ENCODE measurements at regions of chr11 and their contacts with region 1.

Region 1: DNA sequence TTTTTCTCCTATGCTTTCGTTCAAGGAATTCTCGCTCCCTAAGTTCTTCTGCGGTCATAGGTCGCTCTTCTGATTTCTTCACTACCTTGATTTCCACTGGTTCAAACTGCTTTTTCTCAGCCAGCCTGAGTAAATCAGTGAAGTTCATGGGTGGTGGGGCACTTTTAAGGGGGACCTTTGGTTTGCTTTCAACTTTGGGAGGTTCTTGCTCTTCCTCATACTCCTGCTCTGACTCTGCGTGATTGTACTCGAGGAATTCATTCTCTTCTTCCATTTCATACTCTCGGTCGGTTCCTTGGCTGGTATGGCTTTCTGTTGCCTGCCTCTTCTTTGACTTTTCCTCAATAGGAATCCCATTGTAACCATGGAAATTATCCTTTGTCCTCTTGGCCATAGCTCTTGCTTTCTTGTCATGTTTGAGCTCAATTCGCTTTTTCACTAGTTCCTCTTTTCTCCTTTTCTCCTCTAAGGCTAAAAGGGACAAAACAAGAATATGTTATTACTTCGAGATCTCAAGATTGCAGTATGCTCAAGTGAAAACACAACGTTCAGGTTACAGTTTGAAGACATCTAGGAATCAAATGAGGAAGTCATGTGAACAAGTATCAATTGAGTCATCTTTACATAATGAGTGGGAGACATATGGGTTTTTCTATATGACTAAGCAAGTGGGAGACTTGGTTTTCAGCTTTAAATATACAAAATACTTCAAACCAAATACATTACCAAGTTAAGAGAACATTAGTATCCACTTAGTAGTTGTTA is 16.2 kb downstream of the MISFA start:
- DNase-seq: peak; percentile 14
- H3K4me3 Mint-ChIP-seq: peak overlapping the region; percentile 5
- H3K27ac Mint-ChIP-seq: peak overlapping the region; percentile 77
- H3K4me1 Mint-ChIP-seq: peaks cover 46% of the 10 kb centered on the region
- H3K27me3 Mint-ChIP-seq: no peaks in the 10 kb centered on the region

Region 2: DNA sequence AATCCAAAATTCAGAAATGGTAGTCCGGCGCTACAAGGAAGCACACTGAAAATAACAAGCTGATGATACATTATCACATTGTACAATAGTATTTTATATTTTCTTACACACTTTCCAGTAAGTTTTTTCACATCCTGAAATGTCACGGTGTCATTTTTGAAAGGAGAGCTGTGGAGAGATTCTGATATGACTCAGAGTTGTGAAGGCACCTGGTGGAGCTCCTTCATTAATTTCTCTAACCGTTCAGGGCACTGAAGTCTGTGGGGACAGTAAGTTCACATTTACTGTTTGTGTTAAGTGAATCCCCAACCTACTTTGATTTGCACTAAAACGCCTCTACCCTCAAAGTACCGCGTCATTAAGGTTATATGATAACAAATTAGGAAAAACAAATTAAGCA is 146.8 kb before region 1 on chr11:
- CTCF ChIA-PET with region 1: no interaction called
- POLR2A ChIA-PET with region 1: no interaction called
- intact Hi-C with region 1: loop called (anchors 5 kb)
- DNase-seq: no peak
- H3K4me3 Mint-ChIP-seq: no peak overlapping the region
- H3K27ac Mint-ChIP-seq: no peak overlapping the region
- H3K4me1 Mint-ChIP-seq: peaks cover 21% of the 10 kb centered on the region
- H3K27me3 Mint-ChIP-seq: no peaks in the 10 kb centered on the region

Region 3: GRCh38 chr11:18588297-18589252 is 27.2 kb before region 1 on chr11 and contains the start of gene UEVLD:
- CTCF ChIA-PET with region 1: interaction called, 5 read pairs
- POLR2A ChIA-PET with region 1: no interaction called
- intact Hi-C with region 1: loop called (anchors 1 kb)
- DNase-seq: peak; percentile 81
- H3K4me3 Mint-ChIP-seq: no peak within 1 kb of the TSS
- H3K27ac Mint-ChIP-seq: no peak within 1 kb of the TSS
- H3K4me1 Mint-ChIP-seq: peaks cover 10% of the 10 kb centered on the region
- H3K27me3 Mint-ChIP-seq: no peaks in the 10 kb centered on the region
- total RNA-seq, gene UEVLD: 20.9 to 26.2 TPM

Region 4: DNA sequence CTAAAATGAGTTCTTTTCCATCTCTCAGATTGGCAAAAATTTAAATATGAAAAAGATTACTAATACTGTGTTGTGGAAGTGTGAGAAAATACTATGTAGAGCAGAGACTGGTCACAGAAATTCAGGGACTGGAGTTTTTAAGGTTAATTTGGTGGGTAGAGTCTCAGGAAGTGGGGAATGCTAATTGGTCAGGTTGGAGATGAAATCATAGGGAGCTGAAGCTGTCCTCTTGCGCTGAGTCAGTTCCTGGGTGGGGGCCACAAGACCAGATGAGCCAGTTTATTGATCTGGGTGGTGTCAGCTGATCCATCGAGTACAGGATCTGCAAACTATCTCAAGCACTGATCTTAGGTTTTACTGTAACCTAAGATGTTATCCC is 53.4 kb after region 1 on chr11:
- CTCF ChIA-PET with region 1: no interaction called
- POLR2A ChIA-PET with region 1: no interaction called
- intact Hi-C with region 1: loop called (anchors 2 kb)
- DNase-seq: peak; percentile 51
- H3K4me3 Mint-ChIP-seq: peak overlapping the region; percentile 9
- H3K27ac Mint-ChIP-seq: peak overlapping the region; percentile 46
- H3K4me1 Mint-ChIP-seq: peaks cover 54% of the 10 kb centered on the region
- H3K27me3 Mint-ChIP-seq: no peaks in the 10 kb centered on the region

Region 5: DNA sequence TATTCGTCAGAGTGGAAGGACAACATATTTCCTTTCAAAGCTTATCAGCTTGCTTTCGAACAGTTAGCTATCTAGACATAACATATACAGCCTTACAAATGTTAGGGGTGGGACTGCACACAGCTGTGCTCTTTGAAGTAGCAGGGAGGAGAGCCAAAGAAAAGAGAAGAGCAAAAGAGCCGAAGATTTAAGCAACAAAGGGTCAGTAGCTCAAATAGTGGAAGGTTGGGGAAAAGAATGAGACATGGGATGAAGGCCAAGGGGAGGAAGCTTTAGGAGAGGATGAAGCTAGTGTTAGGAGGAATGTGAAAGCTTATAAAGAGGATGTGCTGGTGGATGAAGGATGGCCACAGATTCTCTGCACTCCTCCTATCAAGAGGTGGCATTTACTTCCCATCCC is 142.0 kb after region 1 on chr11:
- CTCF ChIA-PET with region 1: no interaction called
- POLR2A ChIA-PET with region 1: no interaction called
- intact Hi-C with region 1: loop called (anchors 5 kb)
- DNase-seq: no peak
- H3K4me3 Mint-ChIP-seq: no peak overlapping the region
- H3K27ac Mint-ChIP-seq: no peak overlapping the region
- H3K4me1 Mint-ChIP-seq: no peaks in the 10 kb centered on the region
- H3K27me3 Mint-ChIP-seq: no peaks in the 10 kb centered on the region